ENCODE measurements at regions of chr9 and their contacts with region 1.

Region 1: DNA sequence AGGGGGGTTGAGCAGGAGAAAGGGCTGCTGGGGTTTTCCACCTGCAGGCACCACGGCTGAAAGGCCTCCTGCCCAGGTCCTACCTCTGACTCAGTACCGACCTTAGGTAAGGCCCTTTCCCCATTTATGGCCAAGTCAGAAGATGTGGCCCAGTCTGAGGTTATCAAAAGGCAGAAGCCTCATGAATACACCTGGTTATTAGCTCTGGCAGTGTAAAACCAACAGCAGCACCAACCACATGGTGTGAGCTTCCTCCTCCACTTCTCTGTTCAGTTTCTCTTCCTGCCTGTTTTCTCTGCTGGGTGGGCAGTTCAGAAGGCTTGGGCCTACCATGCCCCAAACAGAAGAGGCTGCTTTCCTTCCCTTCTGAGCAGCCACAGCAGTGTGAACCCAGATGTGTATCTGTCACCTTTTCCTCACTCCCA is 86.9 kb downstream of the UGCG start:
- DNase-seq: peak; percentile 94
- ATAC-seq: peak; percentile 66
- H3K4me3 ChIP-seq: peak overlapping the region; percentile 7; the same call in 1 of the 2 replicates
- H3K27ac ChIP-seq: peak overlapping the region; percentile 99
- H3K4me1 ChIP-seq: peaks cover 62% of the 10 kb centered on the region
- H3K27me3 ChIP-seq: no peaks in the 10 kb centered on the region
- CTCF ChIP-seq: no peak
- EP300 ChIP-seq: peak; percentile 64 to 78; a peak in 2 of 4 replicates
- POLR2A ChIP-seq: peak; percentile 68
- RAD21 ChIP-seq: no peak

Region 2: GRCh38 chr9:111833941-111834340 is 149.6 kb before region 1 on chr9:
- CTCF ChIA-PET with region 1: no interaction called
- POLR2A ChIA-PET with region 1: no interaction called
- RAD21 ChIA-PET with region 1: no interaction called
- SMC1A ChIA-PET with region 1: interaction called, 4 read pairs
- in situ Hi-C with region 1: no loop called
- intact Hi-C with region 1: loop called (anchors 5 kb)
- DNase-seq: no peak
- ATAC-seq: peak; percentile 26; the same call in 1 of the 3 replicates
- H3K4me3 ChIP-seq: no peak overlapping the region
- H3K27ac ChIP-seq: no peak overlapping the region
- H3K4me1 ChIP-seq: peaks cover 4% of the 10 kb centered on the region; the same call in 1 of the 2 replicates
- H3K27me3 ChIP-seq: no peaks in the 10 kb centered on the region
- CTCF ChIP-seq: no peak
- EP300 ChIP-seq: no peak
- POLR2A ChIP-seq: no peak
- RAD21 ChIP-seq: no peak

Region 3: DNA sequence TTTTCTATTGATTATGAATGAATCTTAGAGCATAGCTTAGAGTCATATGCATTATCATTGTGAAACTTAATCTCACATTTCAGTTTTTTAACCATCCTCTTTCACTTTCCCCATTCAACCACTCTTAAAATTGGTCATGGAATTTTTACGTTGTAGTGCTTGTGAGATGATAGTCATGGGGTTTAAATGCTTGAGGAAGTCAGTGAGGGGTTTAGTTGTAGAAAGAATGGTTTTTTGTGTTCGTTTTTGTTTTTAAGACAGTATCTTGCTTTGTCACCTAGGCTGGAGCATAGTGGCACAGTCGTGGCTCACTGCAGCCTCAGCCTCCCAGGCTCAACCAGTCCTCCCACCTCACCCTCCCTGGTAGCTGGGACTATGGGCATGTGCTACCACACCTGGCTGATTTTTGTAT is 67.3 kb before region 1 on chr9:
- CTCF ChIA-PET with region 1: interaction called, 10 read pairs
- POLR2A ChIA-PET with region 1: interaction called, 6 read pairs
- RAD21 ChIA-PET with region 1: interaction called, 29 read pairs
- SMC1A ChIA-PET with region 1: interaction called, 24 read pairs
- in situ Hi-C with region 1: no loop called
- intact Hi-C with region 1: no loop called
- DNase-seq: no peak
- ATAC-seq: peak; percentile 67
- H3K4me3 ChIP-seq: peak overlapping the region; percentile 54; the same call in 1 of the 2 replicates
- H3K27ac ChIP-seq: peak overlapping the region; percentile 76
- H3K4me1 ChIP-seq: peaks cover 47% of the 10 kb centered on the region
- H3K27me3 ChIP-seq: no peaks in the 10 kb centered on the region
- CTCF ChIP-seq: no peak
- EP300 ChIP-seq: peak; percentile 42 to 60; a peak in 3 of 4 replicates
- POLR2A ChIP-seq: no peak
- RAD21 ChIP-seq: no peak

Region 4: DNA sequence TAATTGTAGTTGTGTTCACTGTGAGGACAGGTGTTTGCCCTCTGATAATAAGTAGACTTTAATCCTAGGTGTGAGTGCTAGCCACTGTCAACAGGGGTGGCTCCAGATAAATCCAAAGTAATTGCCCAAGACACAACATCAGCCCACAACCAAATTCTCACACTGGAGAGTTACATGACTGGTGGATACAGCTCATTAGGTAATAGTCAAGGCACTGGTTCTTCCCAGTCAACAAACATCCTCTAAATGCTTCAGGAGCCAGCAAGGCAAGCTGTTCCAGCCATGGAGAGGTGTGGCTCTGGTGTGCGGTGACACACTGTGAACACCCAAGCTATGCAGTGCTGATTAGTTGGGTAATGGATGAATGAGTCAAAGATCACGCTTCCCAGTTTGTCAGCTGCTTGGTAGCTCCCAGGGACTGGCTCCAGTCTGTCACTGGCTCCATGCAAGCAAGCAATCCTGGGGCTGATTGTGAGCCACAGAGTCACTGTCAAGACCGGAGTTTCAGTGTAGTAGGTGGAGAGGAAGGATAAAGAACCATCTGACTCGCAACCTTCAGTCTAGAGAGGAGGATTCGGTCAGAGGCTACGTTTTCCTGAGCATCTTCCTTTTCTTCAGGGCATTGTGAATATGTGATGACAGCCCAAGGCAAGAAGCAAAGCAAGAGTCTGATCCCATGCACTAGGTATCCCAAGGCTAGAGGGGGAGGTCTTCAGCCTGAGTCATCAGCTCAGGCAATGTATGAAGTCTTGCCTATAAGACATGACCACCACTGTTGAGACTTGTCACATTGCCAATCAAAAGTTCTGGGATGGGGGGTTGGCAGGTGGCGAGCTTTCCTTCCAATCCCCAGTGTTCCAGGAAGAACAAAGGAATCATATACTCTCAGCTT is 23.8 kb before region 1 on chr9:
- CTCF ChIA-PET with region 1: interaction called, 7 read pairs
- POLR2A ChIA-PET with region 1: interaction called, 7 read pairs
- RAD21 ChIA-PET with region 1: interaction called, 107 read pairs
- SMC1A ChIA-PET with region 1: interaction called, 136 read pairs
- in situ Hi-C with region 1: no loop called
- intact Hi-C with region 1: loop called (anchors 2 kb)
- DNase-seq: no peak
- ATAC-seq: no peak
- H3K4me3 ChIP-seq: no peak overlapping the region
- H3K27ac ChIP-seq: no peak overlapping the region
- H3K4me1 ChIP-seq: peaks cover 16% of the 10 kb centered on the region
- H3K27me3 ChIP-seq: no peaks in the 10 kb centered on the region
- CTCF ChIP-seq: no peak
- EP300 ChIP-seq: no peak
- POLR2A ChIP-seq: no peak
- RAD21 ChIP-seq: no peak

Region 5: DNA sequence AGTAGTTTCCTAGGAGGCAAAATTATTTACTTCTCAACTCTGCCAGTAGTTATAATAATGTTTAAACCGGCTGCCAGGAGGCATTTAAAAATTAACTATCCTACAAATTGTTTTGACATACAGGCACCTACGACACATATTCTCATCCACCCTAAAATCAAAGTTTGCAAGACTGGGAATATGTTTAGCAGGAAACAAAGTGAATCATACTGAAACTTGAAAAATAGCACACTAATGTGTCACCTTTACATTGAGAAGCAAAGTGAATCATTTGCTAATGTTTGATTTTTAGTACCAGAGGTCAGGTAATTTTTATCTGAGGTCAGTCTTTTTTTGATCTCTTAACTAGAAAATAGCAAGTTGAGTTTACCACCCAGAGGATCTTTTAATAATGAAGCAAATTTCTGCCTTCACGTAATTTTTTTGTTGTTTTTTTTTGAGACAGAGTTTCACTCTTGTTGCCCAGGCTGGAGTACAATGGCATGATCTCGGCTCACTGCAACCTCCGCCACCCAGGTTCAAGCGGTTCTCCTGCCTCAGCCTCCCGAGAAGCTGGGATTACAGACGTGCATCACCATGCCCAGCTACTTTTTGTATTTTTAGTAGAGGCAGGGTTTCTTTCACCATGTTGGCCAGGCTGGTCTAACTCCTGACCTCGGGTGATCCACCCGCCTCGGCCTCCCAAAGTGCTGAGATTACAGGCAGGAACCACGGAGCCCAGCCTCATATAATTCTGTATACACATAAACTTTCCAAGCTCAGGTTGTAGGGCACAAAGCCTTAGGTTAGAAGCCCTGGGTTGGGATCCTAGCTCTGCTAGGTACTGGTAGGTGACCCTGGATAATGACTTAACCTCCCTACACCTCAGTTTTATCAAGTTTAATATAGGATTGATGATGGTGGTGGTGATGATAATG is 37.4 kb after region 1 on chr9:
- CTCF ChIA-PET with region 1: interaction called, 10 read pairs
- POLR2A ChIA-PET with region 1: interaction called, 77 read pairs
- RAD21 ChIA-PET with region 1: interaction called, 174 read pairs
- SMC1A ChIA-PET with region 1: interaction called, 313 read pairs
- in situ Hi-C with region 1: no loop called
- intact Hi-C with region 1: no loop called
- DNase-seq: peak; percentile 80
- ATAC-seq: peak; percentile 68
- H3K4me3 ChIP-seq: peak overlapping the region; percentile 10; the same call in 1 of the 2 replicates
- H3K27ac ChIP-seq: peak overlapping the region; percentile 63
- H3K4me1 ChIP-seq: peaks cover 33% of the 10 kb centered on the region
- H3K27me3 ChIP-seq: no peaks in the 10 kb centered on the region
- CTCF ChIP-seq: no peak
- EP300 ChIP-seq: peak; percentile 69 to 75; a peak in 3 of 4 replicates
- POLR2A ChIP-seq: no peak
- RAD21 ChIP-seq: no peak

Measured in GM12878 (cell line).